Activated naive CD4-positive, alpha-beta T cell treated with anti-CD3 and anti-CD28 coated beads for 36 hours (primary cell): ENCODE measurements at regions of chr22 and their contacts with region 1.

Region 1: DNA sequence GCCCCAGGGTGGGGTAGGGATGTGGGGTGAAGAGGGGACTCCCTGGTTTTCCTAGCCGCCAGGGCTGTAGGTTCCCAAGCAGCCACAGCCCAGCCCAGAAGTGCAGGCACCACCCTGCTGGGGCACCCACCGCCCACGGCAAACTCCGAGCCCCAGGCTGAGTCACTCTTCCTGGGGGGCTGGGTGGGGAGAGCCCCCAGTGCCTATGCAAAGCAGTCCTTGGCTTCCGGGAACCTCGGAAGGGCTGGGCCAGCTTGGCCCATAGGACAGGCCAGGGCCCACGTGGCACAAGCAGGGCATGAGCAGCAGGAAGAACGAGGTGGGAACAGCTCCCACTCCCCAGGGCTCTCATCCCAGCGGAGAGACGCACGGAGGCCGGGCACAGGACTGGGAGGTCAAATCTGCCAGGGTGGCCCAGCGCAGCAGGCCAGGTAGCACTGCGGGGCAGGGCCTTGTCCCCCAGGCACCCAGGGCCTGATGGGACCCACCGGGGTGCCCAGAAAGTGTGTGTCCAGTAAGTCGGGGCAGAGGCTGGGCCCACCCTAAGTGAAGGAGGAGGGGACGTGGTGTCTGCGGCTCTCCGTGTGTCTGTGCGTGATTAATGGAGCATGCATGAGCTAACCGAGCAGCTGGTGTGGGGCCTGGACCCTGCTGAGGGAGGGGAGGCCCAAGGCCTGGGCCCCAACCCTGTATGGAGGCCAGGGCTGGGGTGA is 4.6 kb upstream of the IL17REL start:
- DNase-seq: peak; percentile 94
- H3K4me3 Mint-ChIP-seq: peak overlapping the region; percentile 77
- H3K27ac Mint-ChIP-seq: no peak overlapping the region
- H3K4me1 Mint-ChIP-seq: peaks cover 30% of the 10 kb centered on the region
- H3K27me3 Mint-ChIP-seq: no peaks in the 10 kb centered on the region

Region 2: GRCh38 chr22:49936018-49936952 is 80.9 kb before region 1 on chr22:
- CTCF ChIA-PET with region 1: no interaction called
- intact Hi-C with region 1: loop called (anchors 1 kb)
- DNase-seq: peak; percentile 99
- H3K4me3 Mint-ChIP-seq: peak overlapping the region; percentile 57
- H3K27ac Mint-ChIP-seq: peak overlapping the region; percentile 90
- H3K4me1 Mint-ChIP-seq: peaks cover 33% of the 10 kb centered on the region
- H3K27me3 Mint-ChIP-seq: no peaks in the 10 kb centered on the region

Region 3: GRCh38 chr22:49979587-49980264 is 37.4 kb before region 1 on chr22:
- CTCF ChIA-PET with region 1: interaction called, 8 read pairs
- intact Hi-C with region 1: loop called (anchors 2 kb)
- DNase-seq: peak; percentile 58
- H3K4me3 Mint-ChIP-seq: no peak overlapping the region
- H3K27ac Mint-ChIP-seq: peak overlapping the region; percentile 65
- H3K4me1 Mint-ChIP-seq: peaks cover 47% of the 10 kb centered on the region
- H3K27me3 Mint-ChIP-seq: peaks cover 2% of the 10 kb centered on the region

Region 4: GRCh38 chr22:50030297-50031188 is 13.4 kb after region 1 on chr22:
- CTCF ChIA-PET with region 1: interaction called, 19 read pairs
- intact Hi-C with region 1: loop called (anchors 1 kb)
- DNase-seq: peak; percentile 93
- H3K4me3 Mint-ChIP-seq: no peak overlapping the region
- H3K27ac Mint-ChIP-seq: no peak overlapping the region
- H3K4me1 Mint-ChIP-seq: peaks cover 13% of the 10 kb centered on the region
- H3K27me3 Mint-ChIP-seq: peaks cover 21% of the 10 kb centered on the region

Region 5: GRCh38 chr22:50136581-50137015 is 119.5 kb after region 1 on chr22:
- CTCF ChIA-PET with region 1: no interaction called
- intact Hi-C with region 1: no loop called
- DNase-seq: no peak
- H3K4me3 Mint-ChIP-seq: no peak overlapping the region
- H3K27ac Mint-ChIP-seq: no peak overlapping the region
- H3K4me1 Mint-ChIP-seq: no peaks in the 10 kb centered on the region
- H3K27me3 Mint-ChIP-seq: peaks cover 9% of the 10 kb centered on the region

Region 6: GRCh38 chr22:50474668-50475492 is 457.7 kb after region 1 on chr22 and contains the start of gene SBF1:
- CTCF ChIA-PET with region 1: no interaction called
- intact Hi-C with region 1: loop called (anchors 5 kb)
- DNase-seq: peak; percentile 90
- H3K4me3 Mint-ChIP-seq: peak within 1 kb of the TSS; percentile 95
- H3K27ac Mint-ChIP-seq: peak within 1 kb of the TSS; percentile 87
- H3K4me1 Mint-ChIP-seq: peaks cover 46% of the 10 kb centered on the region
- H3K27me3 Mint-ChIP-seq: peaks cover 3% of the 10 kb centered on the region
- total RNA-seq, gene SBF1: 100 TPM